Naive thymus-derived CD4-positive, alpha-beta T cell (primary cell): ENCODE measurements at regions of chr11 and their contacts with region 1.

Region 1: DNA sequence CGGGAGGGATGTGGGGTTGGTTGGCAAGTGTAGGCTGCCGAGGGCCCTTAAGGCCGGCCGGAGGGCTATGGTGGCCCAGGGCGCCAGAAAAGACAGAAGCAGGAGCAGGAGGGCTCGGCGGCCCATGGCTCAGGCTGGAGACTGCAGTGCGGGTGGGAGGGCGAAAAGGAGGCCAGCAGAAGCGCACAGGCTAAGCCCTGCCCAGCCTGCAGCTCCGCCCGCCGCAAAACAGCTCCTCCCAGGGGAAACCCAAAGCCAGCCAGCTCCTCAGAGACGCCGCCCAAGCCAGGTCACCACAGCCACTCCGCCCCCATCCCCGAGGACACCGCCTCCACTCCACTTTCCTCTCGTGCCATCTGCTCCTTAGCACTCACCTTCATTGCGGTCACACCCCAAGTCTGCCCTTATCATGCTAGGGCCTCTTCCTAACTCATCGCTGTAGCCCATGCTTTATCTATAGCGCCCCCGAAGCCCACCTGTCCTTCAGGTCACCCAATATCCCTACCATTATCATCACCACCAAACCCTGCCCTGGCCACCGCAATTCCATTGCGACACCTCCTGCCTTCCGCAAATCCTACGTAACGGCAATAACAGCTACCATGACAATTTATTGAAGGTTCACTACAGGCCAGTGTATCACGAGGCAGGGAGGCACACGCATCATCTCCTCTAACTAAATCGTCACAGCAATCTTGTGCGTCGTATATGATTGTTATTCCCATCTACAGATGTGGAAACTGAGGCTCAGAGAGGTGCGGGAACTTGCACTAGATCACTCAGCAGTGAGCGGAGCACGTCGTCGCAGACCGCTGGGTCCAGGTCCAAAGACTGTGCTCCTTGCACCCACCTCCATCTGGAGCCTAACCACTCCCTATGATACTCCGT is at the start of gene PRCP:
- DNase-seq: peak; percentile 81 to 94 (median 89)
- ATAC-seq: peak; percentile 87
- H3K4me3 ChIP-seq: peak within 1 kb of the TSS; percentile 73
- H3K4me3 Mint-ChIP-seq: peak within 1 kb of the TSS; percentile 93 to 100 (median 98)
- H3K27ac ChIP-seq: peak within 1 kb of the TSS; percentile 92
- H3K27ac Mint-ChIP-seq: peak within 1 kb of the TSS; percentile 92 to 100 (median 100)
- H3K4me1 ChIP-seq: peaks cover 12 to 13% of the 10 kb centered on the region in 2 donors
- H3K4me1 Mint-ChIP-seq: peaks cover 26 to 58% (median 34%) of the 10 kb centered on the region in 7 donors
- H3K27me3 ChIP-seq: no peaks in the 10 kb centered on the region
- H3K27me3 Mint-ChIP-seq: no peaks in the 10 kb centered on the region
- total RNA-seq, gene PRCP: 19.9 to 42.3 (median 31.8) TPM

Region 2: GRCh38 chr11:82733444-82734119 is 166.9 kb before region 1 on chr11 and contains the start of gene FAM181B:
- CTCF ChIA-PET with region 1: no interaction called
- POLR2A ChIA-PET with region 1: interaction called, 7 read pairs
- intact Hi-C with region 1: loop called in 1 of 2 experiments (anchors 1 kb)
- DNase-seq: peak; percentile 32 to 54 (median 44)
- ATAC-seq: peak; percentile 80
- H3K4me3 ChIP-seq: peak within 1 kb of the TSS; percentile 51
- H3K4me3 Mint-ChIP-seq: peak within 1 kb of the TSS; percentile 72 to 84 (median 78)
- H3K27ac ChIP-seq: no peak within 1 kb of the TSS
- H3K27ac Mint-ChIP-seq: peak within 1 kb of the TSS in 2 of 9 donors; percentile 5 to 15
- H3K4me1 ChIP-seq: no peaks in the 10 kb centered on the region
- H3K4me1 Mint-ChIP-seq: peaks cover 8 to 31% (median 24%) of the 10 kb centered on the region in 7 donors
- H3K27me3 ChIP-seq: peaks cover 4 to 8% of the 10 kb centered on the region in 2 donors
- H3K27me3 Mint-ChIP-seq: peaks cover 32 to 80% (median 51%) of the 10 kb centered on the region in 5 donors
- total RNA-seq, gene FAM181B: 0.10 to 0.97 (median 0.40) TPM in 4 of 5 experiments, not detected in the other

Region 3: DNA sequence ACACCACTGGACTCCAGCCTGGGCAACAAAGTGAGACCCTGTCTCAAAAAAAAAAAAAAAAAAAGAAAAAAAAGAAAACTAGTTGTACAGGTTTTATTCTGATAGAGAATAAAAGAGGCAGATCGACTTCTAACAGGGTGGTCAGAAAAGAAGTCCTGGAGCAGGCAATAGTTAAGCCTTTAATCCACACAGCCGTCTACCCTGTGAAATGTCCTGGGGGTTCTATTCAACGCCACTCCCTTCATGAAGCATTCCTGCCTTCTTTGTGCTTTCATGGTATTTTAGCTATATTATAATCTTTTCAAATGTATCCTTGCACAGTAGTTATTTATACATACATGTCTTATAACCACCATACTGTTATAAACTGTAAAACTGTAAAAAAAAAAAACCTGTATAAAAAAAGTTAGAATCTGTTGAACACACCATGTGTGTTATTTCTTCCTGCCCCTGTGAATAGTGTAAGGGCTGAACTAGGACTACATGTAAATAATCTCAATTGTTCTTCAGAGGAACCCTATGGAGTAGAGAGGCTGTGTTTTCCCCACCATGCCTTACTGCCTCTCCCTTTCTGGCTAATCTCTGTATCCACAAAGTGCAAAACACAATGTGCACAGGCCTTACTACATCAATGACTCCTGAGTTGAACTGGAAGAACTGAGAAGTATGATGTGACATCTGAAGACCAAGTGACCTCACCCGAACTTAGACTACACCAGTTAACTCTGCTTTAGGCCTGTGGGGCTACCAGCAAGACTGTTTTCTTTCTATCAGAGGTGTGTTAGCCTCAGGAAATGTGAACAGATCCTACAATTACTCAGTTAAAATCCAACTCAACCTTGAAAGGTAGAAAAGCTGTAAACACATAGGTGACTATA is 25.6 kb before region 1 on chr11:
- CTCF ChIA-PET with region 1: no interaction called
- POLR2A ChIA-PET with region 1: interaction called, 5 read pairs
- intact Hi-C with region 1: loop called in 1 of 2 experiments (anchors 1 kb)
- DNase-seq: no peak
- ATAC-seq: no peak
- H3K4me3 ChIP-seq: no peak overlapping the region
- H3K4me3 Mint-ChIP-seq: no peak overlapping the region
- H3K27ac ChIP-seq: no peak overlapping the region
- H3K27ac Mint-ChIP-seq: peak overlapping the region in 5 of 9 donors; percentile 5 to 58 (median 13)
- H3K4me1 ChIP-seq: peaks cover 11 to 14% of the 10 kb centered on the region in 2 donors
- H3K4me1 Mint-ChIP-seq: peaks cover 17 to 42% (median 27%) of the 10 kb centered on the region in 7 donors
- H3K27me3 ChIP-seq: no peaks in the 10 kb centered on the region
- H3K27me3 Mint-ChIP-seq: no peaks in the 10 kb centered on the region

Region 4: DNA sequence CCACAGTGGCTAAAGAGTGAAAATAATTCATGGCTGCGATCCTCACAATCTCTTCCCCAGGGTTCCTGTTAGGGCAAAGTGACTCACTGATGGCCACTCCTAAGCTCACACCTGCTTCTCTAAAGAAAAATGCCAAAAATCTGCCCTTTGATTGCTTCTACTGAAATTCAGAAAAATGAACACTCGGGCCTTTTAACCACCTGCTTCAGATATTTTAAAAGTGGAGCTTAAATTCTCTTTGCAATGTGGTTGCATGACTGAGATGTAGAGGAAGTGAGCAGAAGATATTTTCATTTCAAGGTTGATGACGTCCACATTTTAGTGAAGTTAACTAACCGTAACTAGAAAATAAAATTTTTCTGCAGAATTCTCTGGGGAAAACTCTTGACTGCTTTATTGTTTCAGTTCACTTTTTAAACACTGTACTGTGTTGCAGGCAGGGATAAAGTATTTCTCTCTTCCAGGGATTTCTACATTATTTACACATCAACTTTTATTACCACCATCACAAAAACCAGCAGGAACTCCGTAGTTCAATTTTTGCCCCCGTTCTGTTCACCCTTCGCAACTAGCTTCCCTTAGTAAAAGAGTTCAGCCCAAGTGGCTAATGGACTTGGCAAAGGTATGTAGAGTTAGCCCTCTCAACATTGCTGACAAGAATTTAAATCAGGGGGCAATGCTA is 162.7 kb after region 1 on chr11:
- CTCF ChIA-PET with region 1: interaction called, 3 read pairs
- POLR2A ChIA-PET with region 1: interaction called, 15 read pairs
- intact Hi-C with region 1: loop called in 1 of 2 experiments (anchors 2 kb)
- DNase-seq: peak in 7 of 9 donors; percentile 19 to 60 (median 50)
- ATAC-seq: peak; percentile 78
- H3K4me3 ChIP-seq: peak overlapping the region; percentile 29
- H3K4me3 Mint-ChIP-seq: peak overlapping the region; percentile 72 to 92 (median 88)
- H3K27ac ChIP-seq: peak overlapping the region; percentile 71
- H3K27ac Mint-ChIP-seq: peak overlapping the region; percentile 90 to 99 (median 94)
- H3K4me1 ChIP-seq: peaks cover 0 to 25% of the 10 kb centered on the region in 2 donors
- H3K4me1 Mint-ChIP-seq: peaks cover 18 to 61% (median 55%) of the 10 kb centered on the region in 7 donors
- H3K27me3 ChIP-seq: no peaks in the 10 kb centered on the region
- H3K27me3 Mint-ChIP-seq: no peaks in the 10 kb centered on the region

Region 5: DNA sequence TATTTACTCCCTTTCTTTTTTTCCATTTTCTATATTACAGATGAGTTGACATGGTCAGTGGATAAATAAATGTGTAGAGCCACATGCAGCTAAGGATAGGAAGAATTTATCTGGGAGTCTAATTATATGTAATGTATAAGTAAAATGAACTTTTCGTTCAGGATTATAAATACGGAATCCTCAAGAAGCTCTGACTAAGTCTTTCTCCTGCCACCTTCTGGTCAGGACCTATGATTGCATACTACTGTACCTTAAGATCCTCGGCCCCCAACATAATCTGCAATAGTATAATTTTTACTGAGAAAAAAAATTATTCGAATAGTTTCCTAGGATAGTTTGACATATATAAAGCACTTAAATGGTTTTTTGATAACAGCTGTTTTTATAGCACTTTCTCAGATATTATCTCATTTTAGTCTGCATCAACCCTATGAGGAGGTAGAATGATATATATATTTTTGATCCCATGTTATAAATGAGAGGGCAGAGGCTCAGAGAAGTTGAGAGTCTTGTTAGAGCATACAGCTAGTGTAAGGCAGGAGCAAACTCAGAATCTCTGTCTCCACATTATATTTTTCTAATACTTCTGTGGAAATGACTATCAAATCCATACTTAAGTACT is 349.6 kb after region 1 on chr11:
- CTCF ChIA-PET with region 1: interaction called, 15 read pairs
- POLR2A ChIA-PET with region 1: interaction called, 5 read pairs
- intact Hi-C with region 1: no loop called
- DNase-seq: peak in 7 of 9 donors; percentile 12 to 48 (median 40)
- ATAC-seq: peak; percentile 77
- H3K4me3 ChIP-seq: no peak overlapping the region
- H3K4me3 Mint-ChIP-seq: peak overlapping the region in 1 of 10 donors; percentile 32
- H3K27ac ChIP-seq: no peak overlapping the region
- H3K27ac Mint-ChIP-seq: no peak overlapping the region
- H3K4me1 ChIP-seq: no peaks in the 10 kb centered on the region
- H3K4me1 Mint-ChIP-seq: peaks cover 0 to 7% (median 0%) of the 10 kb centered on the region in 7 donors
- H3K27me3 ChIP-seq: no peaks in the 10 kb centered on the region
- H3K27me3 Mint-ChIP-seq: no peaks in the 10 kb centered on the region